HepG2 (cell line): ENCODE measurements at regions of chr7 and their contacts with region 1.

Region 1: GRCh38 chr7:25851332-25852210 is 300.4 kb upstream of the NFE2L3 start:
- DNase-seq: peak; percentile 46
- ATAC-seq: peak; percentile 92
- H3K4me3 ChIP-seq: peak overlapping the region in 1 of 3 experiments; percentile 50; a peak in 1 of 6 replicates
- H3K27ac ChIP-seq: no peak overlapping the region
- H3K4me1 ChIP-seq: peaks cover 47% of the 10 kb centered on the region
- H3K27me3 ChIP-seq: peaks cover 2 to 63% of the 10 kb centered on the region in 2 experiments
- CTCF ChIP-seq: peak; percentile 84
- EP300 ChIP-seq: no peak
- POLR2A ChIP-seq: no peak
- RAD21 ChIP-seq: peak; percentile 69

Region 2: GRCh38 chr7:25259587-25260243 is 591.9 kb before region 1 on chr7:
- CTCF ChIA-PET with region 1: interaction called, 13 read pairs
- POLR2A ChIA-PET with region 1: no interaction called
- in situ Hi-C with region 1: loop called (anchors 5 kb)
- intact Hi-C with region 1: loop called (anchors 1 kb)
- DNase-seq: peak; percentile 74
- ATAC-seq: peak; percentile 90
- H3K4me3 ChIP-seq: no peak overlapping the region
- H3K27ac ChIP-seq: no peak overlapping the region
- H3K4me1 ChIP-seq: no peaks in the 10 kb centered on the region
- H3K27me3 ChIP-seq: no peaks in the 10 kb centered on the region; a peak in 1 of 5 replicates
- CTCF ChIP-seq: peak; percentile 86
- EP300 ChIP-seq: no peak
- POLR2A ChIP-seq: no peak
- RAD21 ChIP-seq: peak; percentile 77

Region 3: GRCh38 chr7:25389489-25390106 is 462.0 kb before region 1 on chr7:
- CTCF ChIA-PET with region 1: interaction called, 3 read pairs
- POLR2A ChIA-PET with region 1: no interaction called
- in situ Hi-C with region 1: loop called (anchors 5 kb)
- intact Hi-C with region 1: loop called (anchors 2 kb)
- DNase-seq: peak; percentile 13
- ATAC-seq: no peak
- H3K4me3 ChIP-seq: no peak overlapping the region
- H3K27ac ChIP-seq: no peak overlapping the region
- H3K4me1 ChIP-seq: no peaks in the 10 kb centered on the region
- H3K27me3 ChIP-seq: peaks cover 0 to 2% of the 10 kb centered on the region in 2 experiments; a peak in 2 of 5 replicates
- CTCF ChIP-seq: no peak; the same call in 1 of the 2 replicates
- EP300 ChIP-seq: no peak
- POLR2A ChIP-seq: no peak
- RAD21 ChIP-seq: no peak

Region 4: GRCh38 chr7:25559581-25560367 is 291.8 kb before region 1 on chr7:
- CTCF ChIA-PET with region 1: no interaction called
- POLR2A ChIA-PET with region 1: no interaction called
- in situ Hi-C with region 1: loop called (anchors 5 kb)
- intact Hi-C with region 1: no loop called
- DNase-seq: no peak
- ATAC-seq: no peak
- H3K4me3 ChIP-seq: no peak overlapping the region
- H3K27ac ChIP-seq: no peak overlapping the region
- H3K4me1 ChIP-seq: no peaks in the 10 kb centered on the region
- H3K27me3 ChIP-seq: peaks cover 2 to 27% of the 10 kb centered on the region in 2 experiments; a peak in 3 of 5 replicates
- CTCF ChIP-seq: no peak
- EP300 ChIP-seq: no peak
- POLR2A ChIP-seq: no peak
- RAD21 ChIP-seq: no peak

Region 5: DNA sequence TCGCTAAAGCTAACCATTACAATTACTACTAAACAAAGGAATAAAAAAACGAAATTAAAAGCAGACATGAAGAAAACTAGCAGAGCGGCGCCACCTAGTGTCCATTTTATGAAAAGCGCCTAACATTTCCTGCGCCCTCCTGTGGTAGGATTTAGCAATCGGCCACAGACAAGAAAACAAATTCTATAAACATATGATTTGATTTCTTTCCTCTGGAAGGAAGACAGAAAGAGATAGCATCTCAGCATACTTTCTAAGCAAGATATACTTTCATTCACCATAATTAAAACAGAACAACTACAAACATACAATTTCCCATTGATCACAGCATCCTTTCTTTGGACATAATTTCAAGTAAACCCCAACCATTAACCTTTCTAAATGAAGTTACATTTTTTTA is 285.6 kb before region 1 on chr7:
- CTCF ChIA-PET with region 1: interaction called, 7 read pairs
- POLR2A ChIA-PET with region 1: no interaction called
- in situ Hi-C with region 1: loop called (anchors 5 kb)
- intact Hi-C with region 1: loop called (anchors 2 kb)
- DNase-seq: peak; percentile 50
- ATAC-seq: no peak
- H3K4me3 ChIP-seq: no peak overlapping the region
- H3K27ac ChIP-seq: no peak overlapping the region
- H3K4me1 ChIP-seq: peaks cover 9% of the 10 kb centered on the region
- H3K27me3 ChIP-seq: peaks cover 2 to 11% of the 10 kb centered on the region in 2 experiments; a peak in 3 of 5 replicates
- CTCF ChIP-seq: peak; percentile 90
- EP300 ChIP-seq: no peak
- POLR2A ChIP-seq: no peak
- RAD21 ChIP-seq: peak; percentile 74

Region 6: GRCh38 chr7:25720427-25720826 is 131.1 kb before region 1 on chr7:
- CTCF ChIA-PET with region 1: interaction called, 3 read pairs
- POLR2A ChIA-PET with region 1: no interaction called
- in situ Hi-C with region 1: loop called (anchors 10 kb)
- intact Hi-C with region 1: loop called (anchors 1 kb)
- DNase-seq: no peak
- ATAC-seq: peak; percentile 71
- H3K4me3 ChIP-seq: no peak overlapping the region
- H3K27ac ChIP-seq: no peak overlapping the region
- H3K4me1 ChIP-seq: no peaks in the 10 kb centered on the region
- H3K27me3 ChIP-seq: peaks cover 0 to 6% of the 10 kb centered on the region in 2 experiments; a peak in 1 of 5 replicates
- CTCF ChIP-seq: peak; percentile 44
- EP300 ChIP-seq: no peak
- POLR2A ChIP-seq: no peak
- RAD21 ChIP-seq: no peak

Region 7: GRCh38 chr7:26013551-26014083 is 162.0 kb after region 1 on chr7:
- CTCF ChIA-PET with region 1: no interaction called
- POLR2A ChIA-PET with region 1: no interaction called
- in situ Hi-C with region 1: no loop called
- intact Hi-C with region 1: no loop called
- DNase-seq: no peak
- ATAC-seq: no peak
- H3K4me3 ChIP-seq: no peak overlapping the region
- H3K27ac ChIP-seq: no peak overlapping the region
- H3K4me1 ChIP-seq: no peaks in the 10 kb centered on the region
- H3K27me3 ChIP-seq: no peaks in the 10 kb centered on the region
- CTCF ChIP-seq: no peak
- EP300 ChIP-seq: no peak
- POLR2A ChIP-seq: no peak
- RAD21 ChIP-seq: no peak